ENCODE measurements at regions of chr13 and their contacts with region 1.

Region 1: GRCh38 chr13:45417790-45418534 is at the start of gene SLC25A30:
- DNase-seq: peak; percentile 83
- H3K4me3 Mint-ChIP-seq: peak within 1 kb of the TSS; percentile 81
- H3K27ac Mint-ChIP-seq: peak within 1 kb of the TSS; percentile 87
- H3K4me1 Mint-ChIP-seq: peaks cover 6% of the 10 kb centered on the region
- H3K27me3 Mint-ChIP-seq: no peaks in the 10 kb centered on the region
- CTCF ChIP-seq: no peak
- total RNA-seq, gene SLC25A30: 10.5 and 11.9 TPM in 2 replicates

Region 2: DNA sequence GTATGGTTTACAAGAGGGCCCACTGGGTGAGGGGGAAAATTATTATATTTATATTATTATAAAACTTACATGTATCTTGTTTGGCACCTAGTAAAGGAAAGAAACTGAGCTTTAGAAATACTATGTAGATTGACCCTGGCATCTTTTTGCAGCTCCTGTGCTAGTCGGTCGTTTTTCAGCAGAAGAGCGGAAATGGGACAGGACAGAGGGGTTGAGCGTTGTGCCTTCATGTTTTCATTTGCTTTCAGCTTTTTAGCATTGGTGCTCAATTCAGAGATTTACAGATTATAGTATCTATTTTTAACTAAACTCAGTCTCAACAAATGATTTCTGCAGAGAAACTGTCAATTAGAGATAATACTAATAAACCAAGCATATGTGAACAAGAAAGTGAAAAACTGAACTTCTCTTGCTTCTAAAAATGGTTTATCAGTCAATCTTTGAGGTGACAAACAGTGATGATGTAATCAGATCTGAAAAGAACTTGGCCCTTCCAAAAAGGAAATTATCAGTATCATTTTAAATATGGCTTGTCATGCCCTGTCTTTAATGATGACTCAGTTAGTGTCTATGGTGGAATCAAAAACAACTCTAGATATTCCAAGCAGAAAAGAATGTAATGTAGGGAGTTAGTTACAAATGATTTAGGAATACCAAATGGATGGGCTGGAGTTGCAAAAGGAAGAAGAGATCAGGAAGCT is 160.2 kb before region 1 on chr13:
- CTCF ChIA-PET with region 1: no interaction called
- POLR2A ChIA-PET with region 1: no interaction called
- intact Hi-C with region 1: no loop called
- DNase-seq: no peak
- H3K4me3 Mint-ChIP-seq: no peak overlapping the region
- H3K27ac Mint-ChIP-seq: no peak overlapping the region
- H3K4me1 Mint-ChIP-seq: peaks cover 22% of the 10 kb centered on the region
- H3K27me3 Mint-ChIP-seq: no peaks in the 10 kb centered on the region
- CTCF ChIP-seq: no peak

Region 3: DNA sequence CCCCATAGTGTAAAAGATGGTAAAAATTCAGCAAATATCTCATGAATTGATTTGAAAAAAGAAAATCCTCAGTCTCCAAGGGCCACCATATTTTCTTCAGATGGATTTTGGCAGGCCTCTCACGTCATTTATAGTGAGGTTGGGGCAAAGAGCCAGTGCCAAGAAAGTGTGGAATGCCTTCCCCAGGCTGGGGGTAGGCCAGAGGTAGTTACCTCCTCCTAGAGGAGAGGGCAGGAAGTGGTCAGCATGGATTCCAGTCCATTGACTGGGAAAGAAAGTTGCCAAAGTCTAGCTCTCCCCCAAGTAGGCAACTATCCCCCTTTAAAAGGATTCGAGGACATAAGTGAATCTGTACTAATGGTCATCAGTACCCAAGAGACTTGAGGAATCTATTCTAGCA is 148.8 kb before region 1 on chr13:
- CTCF ChIA-PET with region 1: no interaction called
- POLR2A ChIA-PET with region 1: no interaction called
- intact Hi-C with region 1: no loop called
- DNase-seq: peak; percentile 18
- H3K4me3 Mint-ChIP-seq: no peak overlapping the region
- H3K27ac Mint-ChIP-seq: no peak overlapping the region
- H3K4me1 Mint-ChIP-seq: no peaks in the 10 kb centered on the region
- H3K27me3 Mint-ChIP-seq: no peaks in the 10 kb centered on the region
- CTCF ChIP-seq: no peak

Region 4: GRCh38 chr13:45441633-45442032 is 23.7 kb after region 1 on chr13:
- CTCF ChIA-PET with region 1: interaction called, 10 read pairs
- POLR2A ChIA-PET with region 1: interaction called, 5 read pairs
- intact Hi-C with region 1: no loop called
- DNase-seq: peak; percentile 56
- H3K4me3 Mint-ChIP-seq: no peak overlapping the region
- H3K27ac Mint-ChIP-seq: no peak overlapping the region
- H3K4me1 Mint-ChIP-seq: peaks cover 25% of the 10 kb centered on the region
- H3K27me3 Mint-ChIP-seq: no peaks in the 10 kb centered on the region
- CTCF ChIP-seq: peak; percentile 29

Region 5: GRCh38 chr13:45464687-45465453 is 46.9 kb after region 1 on chr13 and contains the start of gene COG3:
- CTCF ChIA-PET with region 1: interaction called, 3 read pairs
- POLR2A ChIA-PET with region 1: interaction called, 81 read pairs
- intact Hi-C with region 1: loop called (anchors 5 kb)
- DNase-seq: peak; percentile 97
- H3K4me3 Mint-ChIP-seq: peak within 1 kb of the TSS; percentile 90
- H3K27ac Mint-ChIP-seq: peak within 1 kb of the TSS; percentile 90
- H3K4me1 Mint-ChIP-seq: peaks cover 30% of the 10 kb centered on the region
- H3K27me3 Mint-ChIP-seq: no peaks in the 10 kb centered on the region
- CTCF ChIP-seq: peak; percentile 13
- total RNA-seq, gene COG3: 42.8 and 44.1 TPM in 2 replicates

Region 6: GRCh38 chr13:45473627-45474026 is 55.7 kb after region 1 on chr13:
- CTCF ChIA-PET with region 1: interaction called, 4 read pairs
- POLR2A ChIA-PET with region 1: interaction called, 81 read pairs
- intact Hi-C with region 1: no loop called
- DNase-seq: no peak
- H3K4me3 Mint-ChIP-seq: no peak overlapping the region
- H3K27ac Mint-ChIP-seq: no peak overlapping the region
- H3K4me1 Mint-ChIP-seq: peaks cover 22% of the 10 kb centered on the region
- H3K27me3 Mint-ChIP-seq: no peaks in the 10 kb centered on the region
- CTCF ChIP-seq: no peak

Region 7: DNA sequence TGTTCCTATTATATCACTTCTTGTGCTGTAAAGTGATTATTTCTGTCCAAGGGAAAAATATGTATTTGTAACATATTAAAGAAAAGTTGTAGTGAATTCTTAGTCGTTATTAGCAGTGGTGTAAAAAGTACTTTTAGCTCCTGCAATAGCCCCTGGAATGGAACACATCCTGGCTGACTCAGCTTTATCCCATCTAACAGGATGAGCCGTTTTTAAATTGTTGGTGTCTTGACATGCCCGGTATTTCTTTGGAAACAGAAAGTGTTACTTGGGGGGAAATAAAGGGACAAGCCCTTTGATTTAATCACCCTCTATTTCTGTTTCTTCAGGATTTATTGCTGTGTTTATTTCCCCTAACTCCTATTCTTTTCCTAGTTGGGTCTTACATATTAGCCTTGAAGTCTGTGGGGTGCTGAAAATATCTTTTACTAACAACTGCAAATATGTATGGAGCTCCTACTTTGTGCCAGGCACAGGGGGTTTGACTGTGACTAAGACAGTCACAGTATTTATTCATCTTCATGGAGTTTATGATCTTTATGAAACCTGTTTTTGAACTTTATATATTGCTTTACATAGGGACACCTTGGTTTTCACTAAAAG is 64.7 kb after region 1 on chr13:
- CTCF ChIA-PET with region 1: no interaction called
- POLR2A ChIA-PET with region 1: interaction called, 52 read pairs
- intact Hi-C with region 1: no loop called
- DNase-seq: peak; percentile 61
- H3K4me3 Mint-ChIP-seq: peak overlapping the region; percentile 54
- H3K27ac Mint-ChIP-seq: peak overlapping the region; percentile 91
- H3K4me1 Mint-ChIP-seq: peaks cover 13% of the 10 kb centered on the region
- H3K27me3 Mint-ChIP-seq: no peaks in the 10 kb centered on the region
- CTCF ChIP-seq: no peak